Posterior cingulate gyrus (tissue), 11 donors: ENCODE measurements at regions of chr1 and their contacts with region 1.

Region 1: DNA sequence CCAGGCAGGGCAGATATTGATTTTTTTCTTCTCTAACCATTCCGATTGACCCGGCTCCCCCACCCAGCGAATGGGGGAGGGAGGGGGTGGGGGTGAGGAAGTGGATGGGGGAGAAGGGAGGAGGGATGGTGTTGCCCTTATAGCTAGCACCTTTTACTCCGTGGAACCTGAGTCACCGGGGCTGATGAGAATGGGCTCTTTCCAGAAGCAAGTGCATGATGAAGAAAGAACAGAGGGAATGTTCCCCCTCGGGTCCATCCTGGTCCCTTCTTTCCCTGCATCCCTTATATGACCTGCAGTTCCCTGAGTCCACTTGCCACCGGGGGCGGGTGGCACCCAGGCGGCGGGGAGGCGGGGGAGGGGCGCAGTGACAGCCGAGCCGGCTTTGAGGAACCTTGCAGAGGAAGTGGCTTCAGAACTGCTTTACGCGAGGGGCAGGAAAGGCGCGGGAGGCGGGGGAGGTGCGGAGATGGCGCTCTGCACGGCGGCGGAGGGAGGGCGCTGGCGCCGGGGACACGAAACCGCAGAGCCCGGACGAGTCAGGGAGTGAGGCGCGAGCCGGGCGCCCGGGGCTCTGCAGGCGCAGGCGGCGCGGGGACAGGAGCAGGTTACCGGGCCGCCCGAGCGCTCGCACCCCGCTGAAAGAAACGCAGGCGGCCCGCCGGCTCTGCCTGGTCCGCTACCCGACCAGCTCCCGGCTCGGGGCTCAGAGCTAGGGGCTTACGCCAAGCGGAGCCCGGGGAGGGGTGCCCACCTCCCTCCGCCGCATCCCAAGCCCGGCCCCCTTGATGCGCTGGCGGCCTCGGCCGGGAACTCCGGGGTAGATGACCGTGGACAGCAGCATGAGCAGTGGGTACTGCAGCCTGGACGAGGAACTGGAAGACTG is 49.7 kb downstream of the RASSF5 start:
- DNase-seq: peak; percentile 54 to 96 (median 77)

Region 2: DNA sequence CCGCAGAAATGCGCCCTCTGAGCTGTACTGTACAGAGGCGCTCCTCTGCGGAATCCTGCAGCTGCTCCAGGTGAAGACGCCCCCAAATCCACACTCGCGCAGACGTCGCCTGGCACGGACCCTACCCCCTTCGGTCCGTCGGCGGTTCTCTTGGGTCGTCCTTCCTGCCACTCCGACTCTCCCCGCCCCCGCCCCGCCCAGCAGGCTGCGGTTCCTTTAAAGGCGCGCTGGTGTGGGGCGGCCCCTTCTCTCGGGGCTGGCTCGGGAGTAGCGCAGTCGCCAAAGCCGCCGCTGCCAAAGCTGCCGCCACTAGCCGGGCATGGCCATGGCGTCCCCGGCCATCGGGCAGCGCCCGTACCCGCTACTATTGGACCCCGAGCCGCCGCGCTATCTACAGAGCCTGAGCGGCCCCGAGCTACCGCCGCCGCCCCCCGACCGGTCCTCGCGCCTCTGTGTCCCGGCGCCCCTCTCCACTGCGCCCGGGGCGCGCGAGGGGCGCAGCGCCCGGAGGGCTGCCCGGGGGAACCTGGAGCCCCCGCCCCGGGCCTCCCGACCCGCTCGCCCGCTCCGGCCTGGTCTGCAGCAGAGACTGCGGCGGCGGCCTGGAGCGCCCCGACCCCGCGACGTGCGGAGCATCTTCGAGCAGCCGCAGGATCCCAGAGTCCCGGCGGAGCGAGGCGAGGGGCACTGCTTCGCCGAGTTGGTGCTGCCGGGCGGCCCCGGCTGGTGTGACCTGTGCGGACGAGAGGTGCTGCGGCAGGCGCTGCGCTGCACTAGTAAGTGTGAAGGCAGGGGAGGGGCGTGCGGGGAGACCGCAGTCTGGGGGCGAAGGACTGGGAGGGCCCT is 49.5 kb before region 1 on chr1 and contains the start of gene RASSF5:
- intact Hi-C with region 1: loop called (anchors 10 kb)
- DNase-seq: peak; percentile 43 to 97 (median 82)

Region 3: GRCh38 chr1:207659545-207660183 is 1102.7 kb after region 1 on chr1:
- intact Hi-C with region 1: no loop called
- DNase-seq: peak in 1 of 10 donors; percentile 57